Esophagus squamous epithelium (tissue), 5 donors: ENCODE measurements at regions of chr22 and their contacts with region 1.

Region 1: GRCh38 chr22:33000342-33001280 is 57.6 kb downstream of the SYN3 start:
- DNase-seq: no peak
- H3K4me3 ChIP-seq: no peak overlapping the region
- H3K27ac ChIP-seq: no peak overlapping the region
- H3K4me1 ChIP-seq: peaks cover 0 to 41% (median 14%) of the 10 kb centered on the region in 3 donors
- H3K27me3 ChIP-seq: peaks cover 0 to 26% (median 0%) of the 10 kb centered on the region in 4 donors
- CTCF ChIP-seq: peak; percentile 74 to 89 (median 82)
- POLR2A ChIP-seq: no peak

Region 2: GRCh38 chr22:32528984-32529982 is 471.3 kb before region 1 on chr22:
- intact Hi-C with region 1: loop called (anchors 5 kb)
- DNase-seq: no peak
- H3K4me3 ChIP-seq: peak overlapping the region in 1 of 4 donors; percentile 18
- H3K27ac ChIP-seq: peak overlapping the region; percentile 34 to 68 (median 60)
- H3K4me1 ChIP-seq: peaks cover 16 to 58% (median 36%) of the 10 kb centered on the region in 3 donors
- H3K27me3 ChIP-seq: no peaks in the 10 kb centered on the region
- CTCF ChIP-seq: peak; percentile 76 to 95 (median 86)
- POLR2A ChIP-seq: no peak

Region 3: GRCh38 chr22:33160525-33160924 is 159.9 kb after region 1 on chr22:
- intact Hi-C with region 1: no loop called
- DNase-seq: no peak
- H3K4me3 ChIP-seq: no peak overlapping the region
- H3K27ac ChIP-seq: no peak overlapping the region
- H3K4me1 ChIP-seq: no peaks in the 10 kb centered on the region
- H3K27me3 ChIP-seq: no peaks in the 10 kb centered on the region
- CTCF ChIP-seq: no peak
- POLR2A ChIP-seq: no peak